Activated naive CD4-positive, alpha-beta T cell treated with anti-CD3 and anti-CD28 coated beads for 36 hours (primary cell): ENCODE measurements at regions of chr2 and their contacts with region 1.

Region 1: DNA sequence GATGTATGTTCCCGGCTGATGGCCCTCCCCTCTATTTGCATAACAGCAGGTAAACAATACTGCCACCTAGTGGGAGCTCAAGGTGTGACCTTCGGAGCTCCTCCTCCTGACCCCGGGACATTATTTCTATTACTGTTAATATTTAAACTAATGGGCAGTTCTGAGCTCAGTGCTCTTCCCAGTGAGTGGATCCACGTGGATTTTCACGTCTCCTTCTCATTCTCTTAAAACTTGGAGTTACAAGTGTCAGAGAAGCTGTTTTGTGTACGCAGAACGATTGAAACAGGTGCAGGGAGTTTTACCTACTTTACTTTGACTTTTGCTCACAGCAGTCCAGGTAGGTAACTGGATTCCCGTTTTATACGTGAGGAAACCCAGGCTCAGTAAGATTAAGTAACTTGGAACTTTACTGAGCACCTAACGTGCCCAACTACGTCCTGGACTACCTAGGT is 127.3 kb downstream of the PRKCE start:
- DNase-seq: peak; percentile 82
- H3K4me3 Mint-ChIP-seq: no peak overlapping the region
- H3K27ac Mint-ChIP-seq: no peak overlapping the region
- H3K4me1 Mint-ChIP-seq: peaks cover 3% of the 10 kb centered on the region
- H3K27me3 Mint-ChIP-seq: no peaks in the 10 kb centered on the region

Region 2: DNA sequence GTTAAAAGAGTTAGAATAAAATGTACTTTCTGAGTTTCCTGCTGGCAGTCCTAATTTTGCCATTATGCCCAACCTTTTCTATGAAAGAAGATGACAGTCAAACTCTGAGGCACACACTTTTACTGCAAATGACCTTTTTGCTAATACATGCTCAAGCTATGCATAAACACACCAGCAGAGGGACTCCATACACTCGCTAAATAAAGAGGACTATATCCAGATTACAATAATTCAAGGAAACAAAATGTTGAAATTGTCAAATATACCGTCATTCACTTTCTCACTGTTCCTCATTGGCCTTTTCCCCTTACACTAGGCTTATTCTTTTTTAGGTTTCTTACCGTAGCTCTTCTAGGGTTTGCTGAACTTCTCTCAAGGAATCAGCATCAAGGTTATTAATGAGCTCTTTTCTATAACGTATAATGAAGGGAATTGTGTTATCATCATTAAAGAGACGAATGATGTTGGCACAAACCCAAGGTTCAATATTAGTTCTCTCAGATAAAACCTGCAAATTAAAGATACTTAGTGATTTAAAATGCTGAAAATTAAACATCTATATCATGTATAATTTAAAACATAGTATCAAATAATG is 193.4 kb before region 1 on chr2:
- CTCF ChIA-PET with region 1: no interaction called
- intact Hi-C with region 1: loop called (anchors 1 kb)
- DNase-seq: peak; percentile 8
- H3K4me3 Mint-ChIP-seq: no peak overlapping the region
- H3K27ac Mint-ChIP-seq: no peak overlapping the region
- H3K4me1 Mint-ChIP-seq: peaks cover 17% of the 10 kb centered on the region
- H3K27me3 Mint-ChIP-seq: no peaks in the 10 kb centered on the region

Region 3: DNA sequence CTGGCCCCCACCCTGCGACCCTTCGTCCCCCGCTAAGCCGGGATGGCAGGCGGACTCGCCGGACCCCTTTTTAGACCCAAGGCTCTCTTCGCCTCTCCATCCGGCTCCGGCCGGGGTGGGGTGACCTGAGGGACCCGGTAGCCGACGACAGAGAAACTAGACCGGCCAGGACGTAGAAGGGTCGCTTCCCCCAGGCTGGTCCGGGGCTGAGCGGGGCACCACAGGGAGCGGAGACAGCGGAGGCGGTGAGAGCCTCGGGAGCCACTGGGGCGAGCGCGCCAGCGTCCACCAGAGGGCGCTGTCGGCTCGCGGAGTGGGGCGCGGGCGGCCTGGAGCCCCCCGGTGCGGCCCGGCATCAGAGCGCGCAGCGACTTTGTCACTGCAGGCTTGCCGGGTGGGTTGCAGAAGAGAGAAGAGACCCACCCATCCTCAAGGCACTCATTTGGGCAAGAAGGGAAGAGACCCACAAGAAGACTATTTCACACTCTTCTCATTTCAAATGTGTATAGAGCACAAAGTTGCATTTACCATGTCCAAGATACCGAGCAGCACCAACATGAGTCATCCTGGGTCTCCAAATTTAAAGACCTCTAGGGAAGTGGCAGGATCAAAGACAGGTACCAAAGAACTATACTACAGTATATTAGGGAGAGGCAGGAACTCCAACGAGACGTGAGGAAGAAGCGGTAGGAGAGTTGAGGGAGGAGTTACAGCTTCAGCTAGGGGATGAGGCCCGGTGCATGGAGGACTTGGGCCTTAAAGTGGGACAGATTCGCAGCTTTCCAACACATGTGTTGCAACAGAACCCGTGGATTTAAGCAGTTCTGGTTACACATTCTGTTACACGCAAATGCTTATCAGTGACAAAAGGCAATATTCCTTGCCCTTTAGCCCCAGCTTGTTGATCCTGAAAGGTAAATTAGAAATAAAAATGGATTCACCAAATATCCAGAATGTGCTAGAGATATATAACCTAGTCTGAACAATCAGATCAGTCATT is 134.9 kb before region 1 on chr2:
- CTCF ChIA-PET with region 1: interaction called, 47 read pairs
- intact Hi-C with region 1: loop called (anchors 1 kb)
- DNase-seq: peak; percentile 66
- H3K4me3 Mint-ChIP-seq: peak overlapping the region; percentile 36
- H3K27ac Mint-ChIP-seq: no peak overlapping the region
- H3K4me1 Mint-ChIP-seq: peaks cover 4% of the 10 kb centered on the region
- H3K27me3 Mint-ChIP-seq: peaks cover 22% of the 10 kb centered on the region

Region 4: GRCh38 chr2:45650851-45651414 is 127.8 kb before region 1 on chr2:
- CTCF ChIA-PET with region 1: interaction called, 47 read pairs
- intact Hi-C with region 1: no loop called
- DNase-seq: peak; percentile 93
- H3K4me3 Mint-ChIP-seq: peak overlapping the region; percentile 95
- H3K27ac Mint-ChIP-seq: peak overlapping the region; percentile 91
- H3K4me1 Mint-ChIP-seq: peaks cover 22% of the 10 kb centered on the region
- H3K27me3 Mint-ChIP-seq: peaks cover 3% of the 10 kb centered on the region

Region 5: GRCh38 chr2:45789961-45790723 is 11.4 kb after region 1 on chr2:
- CTCF ChIA-PET with region 1: interaction called, 25 read pairs
- intact Hi-C with region 1: no loop called
- DNase-seq: no peak
- H3K4me3 Mint-ChIP-seq: no peak overlapping the region
- H3K27ac Mint-ChIP-seq: no peak overlapping the region
- H3K4me1 Mint-ChIP-seq: peaks cover 8% of the 10 kb centered on the region
- H3K27me3 Mint-ChIP-seq: no peaks in the 10 kb centered on the region

Region 6: DNA sequence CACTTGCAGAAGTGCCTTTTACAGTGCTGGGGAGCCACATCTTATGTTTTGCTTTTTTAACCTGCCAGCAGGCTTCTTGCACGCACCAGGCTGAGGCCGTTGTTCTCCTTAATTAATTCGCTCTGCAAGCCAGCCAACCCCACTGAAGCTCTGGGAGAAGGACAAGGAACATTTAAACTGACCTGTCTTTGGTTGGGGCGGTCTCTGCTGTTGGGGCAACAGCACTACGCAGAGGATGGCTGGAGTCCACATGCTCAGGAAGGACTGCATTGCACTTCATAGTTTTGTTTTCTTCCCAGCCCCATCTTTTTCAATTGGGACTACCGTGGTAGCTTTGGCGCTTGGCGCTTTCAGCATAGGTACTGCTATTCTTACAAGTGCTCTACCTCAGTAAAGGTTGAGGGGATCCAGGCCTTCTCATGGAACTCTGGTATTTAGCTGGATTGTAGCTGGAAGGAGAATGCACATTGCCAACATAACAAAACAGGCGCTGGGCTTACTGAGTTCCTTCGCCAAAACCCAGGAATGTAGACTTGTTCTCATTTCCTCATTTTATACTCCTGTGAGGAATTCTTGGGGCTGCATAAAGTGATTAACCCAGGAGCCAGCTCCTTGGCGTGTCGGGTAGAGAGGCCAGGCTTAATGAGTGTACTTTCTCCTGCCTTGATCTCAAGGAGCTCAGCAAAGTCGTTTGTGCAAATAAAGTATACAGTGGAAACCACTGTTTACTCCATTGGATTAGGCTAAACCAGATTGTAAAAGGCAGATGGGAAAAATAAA is 18.9 kb after region 1 on chr2:
- CTCF ChIA-PET with region 1: interaction called, 25 read pairs
- intact Hi-C with region 1: no loop called
- DNase-seq: no peak
- H3K4me3 Mint-ChIP-seq: no peak overlapping the region
- H3K27ac Mint-ChIP-seq: no peak overlapping the region
- H3K4me1 Mint-ChIP-seq: no peaks in the 10 kb centered on the region
- H3K27me3 Mint-ChIP-seq: no peaks in the 10 kb centered on the region

Region 7: DNA sequence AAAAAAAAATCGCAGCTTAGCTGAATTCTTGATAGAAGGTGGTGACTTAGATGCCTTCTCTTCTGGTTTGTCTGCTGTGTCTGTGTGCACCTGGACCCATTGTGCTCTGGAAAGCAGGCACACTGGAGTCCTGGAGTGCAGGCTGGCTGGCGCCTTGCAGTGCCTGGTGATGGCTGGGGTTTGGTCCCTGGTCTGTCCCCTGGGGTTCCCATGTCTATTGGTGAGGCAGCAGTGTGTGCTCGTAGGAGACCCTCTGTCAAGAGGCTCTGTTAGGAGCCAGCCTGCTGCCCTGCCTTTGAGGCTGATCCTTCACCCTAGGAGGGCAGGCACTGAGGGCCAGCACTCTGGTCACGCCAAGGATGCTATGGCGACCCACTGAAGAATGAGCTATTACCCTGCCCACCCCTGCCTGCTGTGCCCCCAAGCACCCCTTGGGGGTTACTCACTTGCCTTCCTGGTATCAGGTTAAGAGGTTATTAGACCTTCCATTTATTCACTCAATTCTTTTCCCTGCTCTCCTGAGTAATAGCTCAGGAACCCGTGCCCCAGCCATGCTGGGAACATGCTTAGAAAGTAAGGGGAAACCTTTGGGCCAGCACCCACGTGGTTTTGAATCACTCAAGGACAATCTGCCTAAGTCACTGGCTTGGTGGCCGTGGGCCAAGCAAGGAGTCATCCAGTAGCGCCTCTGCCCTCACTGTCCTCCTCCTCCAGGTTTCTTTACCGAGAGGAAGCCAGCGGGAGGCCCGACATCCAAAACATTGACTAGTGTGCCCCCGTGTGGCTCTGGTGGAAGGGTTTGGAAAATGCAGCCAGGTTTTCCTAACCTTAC is 157.3 kb after region 1 on chr2:
- CTCF ChIA-PET with region 1: interaction called, 23 read pairs
- intact Hi-C with region 1: loop called (anchors 1 kb)
- DNase-seq: peak; percentile 76
- H3K4me3 Mint-ChIP-seq: no peak overlapping the region
- H3K27ac Mint-ChIP-seq: no peak overlapping the region
- H3K4me1 Mint-ChIP-seq: peaks cover 3% of the 10 kb centered on the region
- H3K27me3 Mint-ChIP-seq: no peaks in the 10 kb centered on the region

Region 8: DNA sequence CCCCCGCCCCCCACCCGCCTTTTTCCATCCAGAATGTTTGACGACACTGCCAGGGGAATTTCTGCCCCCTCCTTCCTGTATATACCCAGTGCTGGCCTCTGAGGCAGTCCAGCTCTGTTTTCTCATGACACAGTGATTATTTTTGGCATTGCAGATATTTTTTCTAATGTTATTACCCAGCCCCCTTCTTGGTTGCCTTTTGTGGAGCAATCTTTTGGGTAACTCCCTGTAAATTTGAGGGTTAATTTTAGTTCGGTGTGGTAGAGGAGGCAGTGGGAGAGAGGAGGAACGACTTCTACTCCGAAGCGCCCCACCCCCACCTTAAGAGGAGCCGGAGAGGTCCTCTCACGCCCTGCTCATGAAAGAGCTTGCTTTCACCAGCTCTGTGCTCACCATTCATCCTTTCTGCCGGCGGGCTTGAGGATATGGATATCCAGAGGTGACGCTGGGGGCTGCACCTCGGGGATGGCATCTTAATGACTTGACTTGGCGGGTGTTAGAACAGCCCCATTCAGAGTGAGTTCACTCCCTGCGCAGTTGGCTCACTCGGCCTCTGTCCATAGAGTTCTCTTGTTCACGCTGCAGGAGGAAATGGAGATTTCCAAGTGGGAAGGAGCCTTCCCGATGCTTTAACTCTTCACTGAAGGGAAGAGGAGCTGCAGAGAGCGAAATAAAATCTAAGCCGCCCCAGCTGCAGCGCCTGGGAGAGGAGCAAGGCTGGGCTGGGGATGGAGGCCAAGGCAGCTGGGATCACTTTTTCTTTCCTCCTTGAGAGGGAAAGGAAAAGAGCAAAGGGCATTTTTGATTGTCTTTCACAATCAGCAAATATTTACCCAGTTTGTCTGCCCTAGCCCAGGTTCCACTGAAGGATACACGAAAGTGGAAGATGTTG is 556.9 kb after region 1 on chr2:
- CTCF ChIA-PET with region 1: no interaction called
- intact Hi-C with region 1: no loop called
- DNase-seq: no peak
- H3K4me3 Mint-ChIP-seq: no peak overlapping the region
- H3K27ac Mint-ChIP-seq: no peak overlapping the region
- H3K4me1 Mint-ChIP-seq: peaks cover 8% of the 10 kb centered on the region
- H3K27me3 Mint-ChIP-seq: no peaks in the 10 kb centered on the region